Motor neuron (in vitro differentiated cells): ENCODE measurements at regions of chr1 and their contacts with region 1.

Region 1: GRCh38 chr1:234610348-234611152 is 572 bp upstream of the IRF2BP2 start:
- ATAC-seq: peak; percentile 46 to 76 (median 69)
- H3K4me3 ChIP-seq: peak overlapping the region; percentile 47 to 72 (median 58)
- H3K27ac ChIP-seq: peak overlapping the region; percentile 97 to 98
- H3K4me1 ChIP-seq: peaks cover 36 to 39% of the 10 kb centered on the region in 2 donors

Region 2: DNA sequence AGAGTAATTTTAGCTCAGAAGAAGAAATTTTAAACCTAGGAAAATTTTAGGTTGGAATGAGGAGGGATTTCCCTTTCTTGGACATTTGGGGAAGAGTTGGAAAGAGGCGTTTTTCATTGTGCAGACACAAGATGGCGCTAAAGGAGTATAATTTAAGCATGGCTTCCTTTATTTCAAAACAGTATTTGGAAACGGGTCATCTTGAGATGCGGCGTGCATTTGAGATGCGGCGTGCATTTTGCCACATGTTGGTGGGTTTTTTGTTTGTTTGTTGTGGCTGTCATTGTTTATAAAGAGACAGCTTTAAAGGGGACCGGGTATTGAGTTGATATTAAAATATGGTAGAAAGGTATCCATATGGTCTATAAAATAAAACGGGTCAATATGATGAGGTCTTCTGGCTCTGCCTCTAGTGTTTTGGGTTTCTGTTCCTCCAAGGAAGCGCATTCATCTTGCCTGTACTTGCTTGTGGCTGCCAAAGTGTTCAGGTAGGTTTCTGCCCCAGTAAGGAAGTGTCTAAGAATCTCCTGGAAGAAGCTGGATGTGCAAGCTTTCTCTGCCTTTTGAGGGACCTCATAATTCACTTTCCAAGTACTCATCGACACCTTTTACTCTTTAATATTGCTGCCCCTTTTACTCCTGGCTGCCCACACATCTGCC is 495.8 kb before region 1 on chr1:
- in situ Hi-C with region 1: no loop called
- ATAC-seq: peak; percentile 38 to 76 (median 54)
- H3K4me3 ChIP-seq: no peak overlapping the region
- H3K27ac ChIP-seq: no peak overlapping the region
- H3K4me1 ChIP-seq: peaks cover 5 to 7% of the 10 kb centered on the region in 2 donors

Region 3: GRCh38 chr1:234699795-234700665 is 89.5 kb after region 1 on chr1:
- in situ Hi-C with region 1: loop called in 2 of 9 experiments (anchors 25 kb)
- ATAC-seq: peak in 7 of 8 experiments; percentile 51 to 98 (median 97)
- H3K4me3 ChIP-seq: no peak overlapping the region
- H3K27ac ChIP-seq: peak overlapping the region; percentile 74 to 77
- H3K4me1 ChIP-seq: peaks cover 24 to 26% of the 10 kb centered on the region in 2 donors

Region 4: DNA sequence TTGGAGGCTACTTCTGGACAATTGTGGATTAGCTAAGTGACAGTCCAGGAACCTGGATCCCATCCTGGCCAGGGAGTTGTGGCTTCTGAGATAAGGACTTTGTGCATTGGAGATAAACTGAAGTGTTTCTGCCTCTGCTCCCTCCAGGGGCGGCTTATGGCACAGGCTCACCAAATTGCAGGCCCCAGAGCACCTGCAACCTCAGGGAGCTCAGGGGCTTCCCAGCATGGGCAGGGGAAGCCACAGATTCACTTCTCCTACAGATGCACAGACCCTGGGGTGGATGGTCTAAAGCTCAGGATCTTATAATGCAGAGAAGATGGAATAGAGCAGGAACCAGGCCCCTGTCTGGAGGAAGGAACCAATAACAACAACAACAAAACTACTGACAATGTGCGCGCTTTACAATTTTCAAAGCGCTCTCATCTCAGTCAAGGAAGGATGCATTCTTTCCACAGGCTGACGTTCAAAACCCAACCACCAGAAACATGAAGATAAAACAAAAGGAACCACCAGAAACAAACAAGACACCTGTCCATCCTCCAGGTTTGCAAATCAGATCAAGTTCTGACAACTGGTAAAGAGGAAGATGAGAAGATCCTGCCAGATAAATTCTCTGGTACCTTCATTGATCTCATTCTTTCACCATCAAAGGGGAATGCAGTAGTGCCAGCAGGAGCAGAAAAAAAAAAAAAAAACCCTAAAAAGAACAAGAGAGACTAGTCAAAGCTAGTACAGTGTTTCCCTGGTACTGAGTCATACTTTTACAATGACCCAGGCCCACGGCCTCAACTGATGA is 120.4 kb after region 1 on chr1:
- in situ Hi-C with region 1: loop called in 2 of 9 experiments (anchors 25 kb)
- ATAC-seq: peak; percentile 44 to 84 (median 78)
- H3K4me3 ChIP-seq: no peak overlapping the region
- H3K27ac ChIP-seq: no peak overlapping the region
- H3K4me1 ChIP-seq: peaks cover 34 to 49% of the 10 kb centered on the region in 2 donors

Region 5: GRCh38 chr1:234963180-234963903 is 352.8 kb after region 1 on chr1:
- in situ Hi-C with region 1: loop called in 1 of 9 experiments (anchors 25 kb)
- ATAC-seq: peak in 3 of 8 experiments; percentile 11 to 54 (median 47)
- H3K4me3 ChIP-seq: no peak overlapping the region
- H3K27ac ChIP-seq: no peak overlapping the region
- H3K4me1 ChIP-seq: peaks cover 41 to 47% of the 10 kb centered on the region in 2 donors

Region 6: DNA sequence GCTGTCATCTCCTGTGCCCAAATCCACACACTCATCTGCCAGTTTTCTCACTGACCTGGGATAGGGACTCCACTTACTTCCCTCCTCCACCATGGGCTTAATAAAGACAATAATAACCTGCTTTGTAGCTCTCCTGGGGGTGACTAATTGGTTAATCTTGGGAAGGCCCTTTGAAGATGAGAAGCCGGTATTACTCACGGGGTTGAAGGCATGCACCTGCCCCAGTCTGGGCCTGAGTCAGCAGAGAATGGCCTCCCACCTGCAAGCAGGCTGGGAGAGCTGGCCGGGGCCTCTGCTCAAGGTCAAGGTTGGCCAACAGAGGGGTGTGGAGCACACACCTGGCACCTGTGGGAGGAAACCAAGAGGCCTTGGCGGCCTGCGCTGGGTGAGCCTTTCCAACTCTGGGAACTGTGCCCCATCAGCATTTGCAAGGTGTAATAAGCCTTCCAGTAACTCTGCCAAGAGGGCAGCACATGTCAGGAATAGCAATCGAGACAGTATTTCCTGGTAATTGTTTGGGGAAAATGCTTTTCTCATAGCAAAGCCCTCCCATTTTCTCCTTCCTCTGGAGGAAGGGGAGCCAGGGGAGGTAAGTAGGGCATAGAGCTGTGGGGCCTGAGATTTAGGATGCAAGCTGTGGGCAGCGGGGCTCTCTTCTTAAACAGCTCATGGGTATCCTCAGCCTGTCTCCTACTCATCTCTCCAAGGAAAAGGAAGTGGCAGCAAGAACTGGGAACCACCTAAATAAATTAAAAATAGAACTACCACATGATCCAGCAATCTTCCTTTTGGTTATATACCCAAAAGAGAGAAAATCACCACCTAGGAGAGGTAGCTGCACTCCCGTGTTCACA is 469.1 kb after region 1 on chr1:
- in situ Hi-C with region 1: loop called in 6 of 9 experiments (anchors 10 to 25 kb)
- ATAC-seq: no peak
- H3K4me3 ChIP-seq: no peak overlapping the region
- H3K27ac ChIP-seq: no peak overlapping the region
- H3K4me1 ChIP-seq: peaks cover 29% of the 10 kb centered on the region in 2 donors

Region 7: GRCh38 chr1:235087896-235088295 is 477.3 kb after region 1 on chr1:
- in situ Hi-C with region 1: loop called in 7 of 9 experiments (anchors 5 to 25 kb)
- ATAC-seq: no peak
- H3K4me3 ChIP-seq: no peak overlapping the region
- H3K27ac ChIP-seq: no peak overlapping the region
- H3K4me1 ChIP-seq: peaks cover 34 to 35% of the 10 kb centered on the region in 2 donors